Uterus (tissue), 4 donors: ENCODE measurements at regions of chr15 and their contacts with region 1.

Region 1: GRCh38 chr15:100349696-100350433 is 8.1 kb upstream of the ADAMTS17 start:
- DNase-seq: peak; percentile 95 to 97
- H3K4me3 ChIP-seq: peak overlapping the region; percentile 59 to 68
- H3K27ac ChIP-seq: peak overlapping the region; percentile 92 to 96
- H3K4me1 ChIP-seq: no peaks in the 10 kb centered on the region
- H3K27me3 ChIP-seq: no peaks in the 10 kb centered on the region
- CTCF ChIP-seq: peak; percentile 84 to 96 (median 90)
- POLR2A ChIP-seq: peak in 1 of 2 donors; percentile 38

Region 2: GRCh38 chr15:100559330-100559729 is 209.5 kb after region 1 on chr15:
- intact Hi-C with region 1: no loop called
- DNase-seq: no peak
- H3K4me3 ChIP-seq: no peak overlapping the region
- H3K27ac ChIP-seq: no peak overlapping the region
- H3K4me1 ChIP-seq: no peaks in the 10 kb centered on the region
- H3K27me3 ChIP-seq: no peaks in the 10 kb centered on the region
- CTCF ChIP-seq: no peak
- POLR2A ChIP-seq: no peak

Region 3: DNA sequence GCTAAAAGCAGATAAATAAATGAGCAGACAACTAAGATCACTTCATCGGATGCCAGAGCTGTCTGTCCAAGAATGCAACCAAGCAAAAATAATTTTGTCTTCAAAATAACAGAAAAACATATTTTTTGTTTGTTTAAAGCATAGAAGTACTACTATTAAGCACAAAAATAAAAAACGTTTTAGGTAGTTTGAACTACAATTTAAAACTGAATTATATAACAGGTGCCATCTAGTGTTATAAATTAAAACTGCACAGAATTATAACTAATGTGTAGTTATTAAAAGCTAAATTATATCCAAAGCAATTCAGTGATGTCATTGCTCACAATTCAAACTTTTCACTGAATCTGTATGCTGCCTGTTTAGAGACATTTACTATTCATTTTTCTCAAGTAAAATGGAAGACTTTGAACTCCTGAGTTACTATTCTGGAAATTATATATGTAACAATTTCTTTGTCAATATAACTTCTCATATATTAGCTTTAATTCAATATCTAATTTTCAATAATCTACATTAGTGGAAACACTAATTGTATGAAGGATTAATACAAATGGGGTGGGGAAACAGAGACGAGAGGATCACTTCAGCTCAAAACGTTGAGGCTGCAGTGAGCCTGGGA is 222.6 kb after region 1 on chr15:
- intact Hi-C with region 1: loop called (anchors 5 kb)
- DNase-seq: no peak
- H3K4me3 ChIP-seq: no peak overlapping the region
- H3K27ac ChIP-seq: no peak overlapping the region
- H3K4me1 ChIP-seq: no peaks in the 10 kb centered on the region
- H3K27me3 ChIP-seq: no peaks in the 10 kb centered on the region
- CTCF ChIP-seq: peak; percentile 39 to 55 (median 48)
- POLR2A ChIP-seq: no peak